Activated naive CD4-positive, alpha-beta T cell treated with anti-CD3 and anti-CD28 coated beads, Interleukin-2, amount 10 ng/mL, durations not matched to agents 7 days and 5 days (primary cell): ENCODE measurements at regions of chr1 and their contacts with region 1.

Region 1: DNA sequence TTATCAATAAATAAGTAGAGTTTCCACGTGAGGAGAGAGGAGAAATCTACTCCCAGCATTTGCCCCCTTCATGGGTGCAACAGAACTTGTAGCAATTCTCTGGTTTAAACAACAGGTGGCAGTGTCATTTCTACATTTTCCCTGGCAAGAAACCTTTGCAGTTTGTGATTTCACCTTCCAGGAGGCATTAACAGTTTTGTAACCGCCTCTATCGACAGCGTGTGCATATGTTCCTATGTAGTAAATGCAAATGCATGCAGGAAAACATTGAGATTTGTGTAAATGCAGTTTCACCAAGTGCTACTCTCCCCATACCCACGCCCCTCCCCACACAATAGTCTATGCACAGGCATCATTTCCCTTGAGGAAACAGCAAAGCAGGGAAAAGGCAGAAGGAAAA is 494.7 kb downstream of the SMYD3 start:
- DNase-seq: no peak
- H3K4me3 Mint-ChIP-seq: no peak overlapping the region
- H3K27ac Mint-ChIP-seq: no peak overlapping the region
- H3K4me1 Mint-ChIP-seq: no peaks in the 10 kb centered on the region
- H3K27me3 Mint-ChIP-seq: no peaks in the 10 kb centered on the region

Region 2: GRCh38 chr1:246029616-246030015 is 17.3 kb after region 1 on chr1:
- CTCF ChIA-PET with region 1: no interaction called
- DNase-seq: no peak
- H3K4me3 Mint-ChIP-seq: no peak overlapping the region
- H3K27ac Mint-ChIP-seq: no peak overlapping the region
- H3K4me1 Mint-ChIP-seq: no peaks in the 10 kb centered on the region
- H3K27me3 Mint-ChIP-seq: no peaks in the 10 kb centered on the region

Region 3: GRCh38 chr1:246492611-246493245 is 480.4 kb after region 1 on chr1:
- CTCF ChIA-PET with region 1: interaction called, 13 read pairs
- DNase-seq: peak; percentile 64
- H3K4me3 Mint-ChIP-seq: no peak overlapping the region
- H3K27ac Mint-ChIP-seq: no peak overlapping the region
- H3K4me1 Mint-ChIP-seq: no peaks in the 10 kb centered on the region
- H3K27me3 Mint-ChIP-seq: no peaks in the 10 kb centered on the region